Spleen (tissue), 13 donors: ENCODE measurements at regions of chr12 and their contacts with region 1.

Region 1: DNA sequence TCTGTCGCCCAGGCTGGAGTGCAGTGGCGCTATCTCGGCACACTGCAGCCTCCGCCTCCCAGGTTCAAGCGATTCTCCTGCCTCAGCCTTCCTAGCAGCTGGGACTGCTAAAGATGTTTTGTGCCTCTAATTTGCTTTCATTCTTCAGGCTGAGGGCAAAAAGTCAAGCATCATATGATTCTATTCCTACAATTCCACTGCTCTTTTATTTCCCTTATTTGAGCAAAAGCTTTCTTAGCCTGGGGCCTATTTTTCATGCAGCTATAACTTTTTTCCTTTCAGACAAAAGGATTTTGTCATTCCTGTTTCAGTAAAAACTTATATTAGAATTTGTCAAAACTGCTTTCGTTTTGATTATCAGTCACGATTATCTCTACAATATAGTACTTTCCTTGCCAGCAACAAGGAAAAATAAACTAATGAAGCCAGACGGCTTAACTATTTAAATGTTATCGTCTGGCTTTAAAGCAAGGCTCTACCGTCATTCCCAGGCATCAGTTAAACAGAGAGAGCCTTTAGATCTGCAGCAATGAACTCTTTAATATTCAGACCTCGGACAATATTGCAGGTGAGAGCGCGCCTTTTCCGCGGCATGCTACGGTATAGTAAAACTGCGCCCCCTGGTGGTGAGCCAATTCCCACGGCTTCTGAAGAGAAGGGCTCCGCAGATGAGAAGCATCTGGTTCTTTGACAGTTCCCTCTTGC is 1.4 kb upstream of the SLC2A13 start:
- DNase-seq: peak; percentile 96
- H3K4me3 ChIP-seq: peak overlapping the region; percentile 23 to 97 (median 62)
- H3K27ac ChIP-seq: peak overlapping the region in 7 of 8 donors; percentile 48 to 91 (median 88)
- H3K4me1 ChIP-seq: peaks cover 14 to 48% (median 37%) of the 10 kb centered on the region in 6 donors
- H3K27me3 ChIP-seq: peaks cover 0 to 5% (median 0%) of the 10 kb centered on the region in 7 donors
- CTCF ChIP-seq: peak; percentile 67 to 96 (median 90)
- POLR2A ChIP-seq: no peak

Region 2: DNA sequence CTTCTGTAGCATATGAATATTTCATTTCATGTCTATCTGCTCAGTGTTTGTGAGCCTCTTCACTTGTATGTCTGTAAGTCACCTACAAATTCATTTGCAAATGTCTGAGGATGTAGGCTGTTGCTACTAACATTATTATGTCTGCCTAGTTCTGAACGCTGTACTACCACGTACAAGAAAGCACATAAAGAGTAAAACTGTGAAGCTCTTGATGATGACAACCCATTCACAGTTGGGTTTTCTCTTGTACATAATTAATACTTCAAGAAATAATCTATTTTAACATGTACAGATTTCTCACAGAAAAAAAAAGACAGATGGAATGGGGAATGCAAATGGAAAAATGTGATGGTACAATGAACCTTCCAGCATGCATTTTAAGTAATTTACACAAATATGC is 1137.5 kb before region 1 on chr12:
- intact Hi-C with region 1: no loop called
- DNase-seq: no peak
- H3K4me3 ChIP-seq: no peak overlapping the region
- H3K27ac ChIP-seq: no peak overlapping the region
- H3K4me1 ChIP-seq: no peaks in the 10 kb centered on the region
- H3K27me3 ChIP-seq: no peaks in the 10 kb centered on the region
- CTCF ChIP-seq: no peak
- POLR2A ChIP-seq: no peak

Region 3: DNA sequence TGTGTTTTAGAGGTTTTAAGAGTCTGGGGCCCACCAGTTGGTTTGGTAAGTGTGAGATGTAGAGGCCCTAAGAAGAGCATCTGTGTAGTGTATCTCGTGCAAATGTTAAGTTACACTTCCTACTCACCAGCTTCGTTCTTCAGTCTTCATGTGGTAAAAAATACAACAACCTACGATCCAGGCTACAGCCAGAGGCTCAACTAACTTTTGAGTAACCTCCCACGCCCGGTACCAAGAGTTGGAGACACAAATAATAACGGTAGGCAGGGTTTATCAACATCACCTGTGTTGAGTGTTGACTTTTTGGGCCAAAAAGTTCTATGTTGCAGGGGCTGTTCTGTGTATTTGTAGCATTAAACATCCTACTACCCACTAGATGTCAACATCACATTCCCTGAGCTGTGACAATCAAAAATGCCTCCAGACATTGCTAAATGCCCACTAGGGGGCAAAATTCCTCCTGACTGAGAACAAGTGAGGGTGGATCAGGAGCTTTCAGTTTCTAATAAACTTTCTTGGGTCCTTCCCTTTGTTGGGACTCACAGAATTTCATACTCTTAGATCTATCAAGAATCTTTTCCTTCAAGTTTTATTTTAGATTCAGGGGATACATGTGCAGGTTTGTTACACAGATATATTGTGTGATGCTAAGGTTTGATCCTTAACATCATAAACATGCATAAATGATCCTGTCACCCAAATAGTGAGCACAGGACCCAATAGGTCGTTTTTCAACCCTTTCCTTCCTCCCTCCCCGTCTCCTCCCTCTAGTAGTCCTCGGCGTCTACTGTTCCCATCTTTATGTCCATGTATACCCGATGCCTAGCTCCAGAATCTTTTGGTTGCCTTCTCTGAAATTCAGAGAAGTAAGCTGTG is 96.1 kb before region 1 on chr12:
- intact Hi-C with region 1: loop called (anchors 5 kb)
- DNase-seq: no peak
- H3K4me3 ChIP-seq: peak overlapping the region in 7 of 8 donors; percentile 16 to 62 (median 25)
- H3K27ac ChIP-seq: peak overlapping the region in 6 of 8 donors; percentile 13 to 65 (median 46)
- H3K4me1 ChIP-seq: peaks cover 0 to 24% (median 17%) of the 10 kb centered on the region in 6 donors
- H3K27me3 ChIP-seq: no peaks in the 10 kb centered on the region
- CTCF ChIP-seq: peak in 10 of 11 experiments; percentile 43 to 84 (median 76)
- POLR2A ChIP-seq: no peak